GM12878 (cell line): ENCODE measurements at regions of chr5 and their contacts with region 1.

Region 1: DNA sequence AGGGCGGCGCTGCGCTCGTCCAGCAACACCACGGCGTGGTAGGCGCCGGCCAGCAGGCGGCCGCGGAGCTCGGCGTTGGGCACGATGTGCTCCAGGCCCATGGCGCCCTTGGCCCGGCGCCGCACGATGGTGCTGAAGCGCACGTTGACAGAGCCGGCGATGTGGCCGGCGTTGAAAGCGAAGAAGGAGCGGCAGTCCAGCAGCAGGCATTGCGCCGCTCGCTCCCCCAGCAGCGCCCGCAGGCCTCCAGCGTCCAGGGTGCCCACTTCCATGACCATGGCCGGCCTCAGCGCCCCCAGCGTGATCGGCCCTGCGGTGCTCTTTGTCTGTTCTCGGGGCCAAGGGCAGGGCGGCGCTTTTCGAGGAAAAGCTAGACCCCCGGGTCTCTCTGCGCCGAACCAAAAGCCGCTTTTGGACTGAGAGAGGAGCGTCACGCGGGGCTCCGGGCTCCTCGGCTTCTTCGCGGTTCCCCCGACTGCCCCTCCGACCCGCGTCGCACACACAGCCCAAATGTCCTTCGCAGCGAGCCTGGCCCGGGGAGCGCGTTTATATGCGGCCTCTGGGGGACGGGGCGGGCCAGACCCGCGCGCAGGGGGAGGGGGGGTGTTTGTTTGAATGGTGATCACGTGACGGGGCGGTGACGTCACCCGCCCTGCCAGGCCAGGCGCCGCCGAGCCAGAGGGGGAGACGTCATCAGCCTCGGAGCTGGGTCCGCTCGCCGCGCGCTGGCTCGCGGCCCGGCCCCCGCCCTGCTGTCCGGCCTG is at the start of gene DUSP1:
- DNase-seq: no peak
- ATAC-seq: peak; percentile 76
- H3K4me3 ChIP-seq: peak within 1 kb of the TSS; percentile 73
- H3K27ac ChIP-seq: peak within 1 kb of the TSS; percentile 72
- H3K4me1 ChIP-seq: peaks cover 23% of the 10 kb centered on the region
- H3K27me3 ChIP-seq: no peaks in the 10 kb centered on the region
- CTCF ChIP-seq: peak; percentile 57 to 65 (median 59); a peak in 5 of 6 replicates
- EP300 ChIP-seq: 0 out of 4 replicates have a peak, but pooled peaks of 1 of the 2 experiments have one; percentile 32
- POLR2A ChIP-seq: peak; percentile 95
- RAD21 ChIP-seq: peak; percentile 48
- polyA plus RNA-seq, gene DUSP1: 1.4 to 1.9 TPM

Region 2: DNA sequence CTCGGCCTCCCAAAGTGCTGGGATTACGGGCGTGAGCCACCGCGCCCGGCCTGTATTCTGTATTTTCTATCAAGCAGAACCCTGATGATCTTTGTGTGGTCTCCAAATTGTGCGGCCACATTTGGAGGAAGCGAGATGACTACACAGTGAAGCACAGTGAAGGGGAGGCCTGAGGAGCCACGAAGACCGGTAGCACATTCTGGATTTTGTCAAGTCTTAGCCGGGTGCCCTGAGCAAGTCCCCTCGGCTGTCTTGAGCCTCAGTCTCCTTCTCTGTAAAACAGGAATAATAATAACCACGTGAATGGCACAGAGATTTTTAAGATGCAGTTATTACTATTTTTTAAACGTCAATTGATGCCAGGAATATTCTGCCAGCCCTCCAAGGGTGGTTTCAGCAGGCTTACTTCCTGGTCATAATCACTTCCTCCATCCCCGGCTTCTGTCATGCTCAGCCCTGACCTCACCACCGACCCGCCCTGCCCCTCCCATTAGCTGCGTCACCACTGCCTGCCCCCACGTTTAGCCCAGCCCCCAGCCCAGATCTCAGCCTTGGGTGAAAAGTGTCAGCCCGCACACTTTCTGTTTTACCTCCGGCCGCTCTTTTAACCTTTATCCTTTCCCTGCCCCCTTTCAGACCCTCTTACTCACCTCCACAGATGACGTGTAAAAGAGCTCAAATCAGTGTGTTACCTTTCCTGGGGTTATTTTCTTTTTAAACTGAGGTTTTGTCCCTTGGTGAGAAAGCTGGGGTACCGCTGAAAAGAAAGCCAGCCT is 36.2 kb after region 1 on chr5:
- CTCF ChIA-PET with region 1: interaction called, 4 read pairs
- POLR2A ChIA-PET with region 1: interaction called, 6 read pairs
- RAD21 ChIA-PET with region 1: interaction called, 17 read pairs
- SMC1A ChIA-PET with region 1: interaction called, 13 read pairs
- in situ Hi-C with region 1: no loop called
- intact Hi-C with region 1: loop called (anchors 2 kb)
- DNase-seq: peak; percentile 81
- ATAC-seq: peak; percentile 100
- H3K4me3 ChIP-seq: peak overlapping the region; percentile 62
- H3K27ac ChIP-seq: peak overlapping the region; percentile 64
- H3K4me1 ChIP-seq: peaks cover 6% of the 10 kb centered on the region
- H3K27me3 ChIP-seq: no peaks in the 10 kb centered on the region
- CTCF ChIP-seq: no peak
- EP300 ChIP-seq: no peak
- POLR2A ChIP-seq: peak; percentile 54
- RAD21 ChIP-seq: no peak

Region 3: DNA sequence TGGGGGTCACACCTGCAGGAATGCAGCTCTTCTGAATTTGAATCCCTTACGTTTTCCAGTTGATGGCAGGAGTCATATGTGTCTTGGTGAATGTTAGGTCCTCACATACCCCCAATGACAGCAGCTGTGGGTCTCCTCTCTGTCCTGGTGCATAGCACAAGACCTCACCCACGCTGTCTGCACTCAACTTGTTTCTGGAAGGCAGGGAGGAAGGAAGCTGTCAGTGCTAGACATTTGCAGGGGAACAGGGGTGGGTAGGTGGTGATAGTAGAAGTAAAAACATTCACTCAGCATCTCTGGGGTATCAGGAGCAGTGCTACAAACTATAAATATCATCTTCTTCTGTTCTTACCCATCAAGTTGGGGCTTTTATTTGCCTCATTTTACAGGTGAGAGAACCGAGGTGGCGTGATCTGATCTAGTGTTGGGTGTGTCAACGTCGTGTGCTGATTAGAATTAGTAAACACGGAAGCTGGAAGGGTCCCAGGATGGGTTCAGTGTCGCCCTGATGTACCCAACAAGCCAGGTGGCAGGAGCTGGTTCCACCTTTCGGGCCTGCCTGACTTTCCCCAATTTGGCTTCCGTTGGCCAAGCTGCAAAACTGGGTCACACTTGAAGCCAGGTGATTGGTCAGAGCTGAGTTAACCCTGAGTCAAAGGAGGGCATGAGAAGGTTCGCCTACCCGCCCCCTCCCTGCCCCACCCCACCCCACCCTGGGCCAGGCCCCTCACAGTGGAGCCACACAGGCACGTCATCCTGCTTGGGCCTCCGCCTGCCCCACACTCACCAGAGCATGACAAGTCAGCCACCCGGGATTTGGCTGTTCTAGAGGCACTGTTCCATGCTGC is 79.0 kb after region 1 on chr5:
- CTCF ChIA-PET with region 1: interaction called, 20 read pairs
- POLR2A ChIA-PET with region 1: interaction called, 14 read pairs
- RAD21 ChIA-PET with region 1: interaction called, 21 read pairs
- SMC1A ChIA-PET with region 1: interaction called, 3 read pairs
- in situ Hi-C with region 1: no loop called
- intact Hi-C with region 1: no loop called
- DNase-seq: peak; percentile 52
- ATAC-seq: peak; percentile 88
- H3K4me3 ChIP-seq: peak overlapping the region; percentile 21; the same call in 1 of the 2 replicates
- H3K27ac ChIP-seq: peak overlapping the region; percentile 73
- H3K4me1 ChIP-seq: peaks cover 22% of the 10 kb centered on the region
- H3K27me3 ChIP-seq: no peaks in the 10 kb centered on the region
- CTCF ChIP-seq: no peak
- EP300 ChIP-seq: no peak
- POLR2A ChIP-seq: peak; percentile 42; the same call in 1 of the 2 replicates
- RAD21 ChIP-seq: no peak

Region 4: DNA sequence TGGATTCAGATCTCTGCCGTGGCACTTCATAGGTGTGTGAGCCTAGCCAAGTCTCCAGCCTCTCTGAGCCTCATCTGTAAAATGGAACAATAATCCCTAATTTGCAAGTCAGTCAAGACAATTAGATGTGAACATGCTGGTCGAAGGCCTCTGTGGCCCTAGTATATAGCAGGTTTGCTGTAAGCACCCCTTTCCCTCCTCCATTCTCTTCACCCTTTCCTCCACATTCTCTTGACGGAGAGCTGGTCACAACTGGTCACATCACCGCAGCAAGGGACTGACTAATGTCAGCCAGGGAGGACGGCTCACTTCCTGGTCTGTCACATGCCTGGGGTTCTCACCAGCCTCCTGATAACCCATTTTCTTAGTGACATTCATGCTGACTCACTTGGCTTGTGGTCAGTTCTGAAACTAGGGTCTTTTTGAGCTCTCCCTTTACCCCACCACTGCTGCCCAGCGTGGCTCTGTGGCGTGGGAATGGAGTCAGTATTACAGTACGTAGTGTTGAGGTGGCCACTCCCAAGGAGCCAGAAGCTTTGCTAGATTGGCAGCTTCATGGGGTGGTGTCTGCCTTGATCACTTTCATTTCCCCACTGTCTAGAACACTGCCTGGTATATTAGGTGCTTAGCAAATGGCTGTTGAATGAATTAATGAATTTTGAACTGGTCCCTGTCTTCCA is 111.0 kb after region 1 on chr5:
- CTCF ChIA-PET with region 1: interaction called, 9 read pairs
- POLR2A ChIA-PET with region 1: interaction called, 4 read pairs
- RAD21 ChIA-PET with region 1: interaction called, 12 read pairs
- SMC1A ChIA-PET with region 1: interaction called, 6 read pairs
- in situ Hi-C with region 1: no loop called
- intact Hi-C with region 1: no loop called
- DNase-seq: peak; percentile 72
- ATAC-seq: peak; percentile 98
- H3K4me3 ChIP-seq: no peak overlapping the region
- H3K27ac ChIP-seq: peak overlapping the region; percentile 86
- H3K4me1 ChIP-seq: peaks cover 16% of the 10 kb centered on the region
- H3K27me3 ChIP-seq: no peaks in the 10 kb centered on the region
- CTCF ChIP-seq: no peak
- EP300 ChIP-seq: 0 out of 4 replicates have a peak, but pooled peaks of 1 of the 2 experiments have one; percentile 28
- POLR2A ChIP-seq: peak; percentile 75
- RAD21 ChIP-seq: no peak

Region 5: GRCh38 chr5:172904643-172905347 is 133.9 kb after region 1 on chr5:
- CTCF ChIA-PET with region 1: interaction called, 24 read pairs
- POLR2A ChIA-PET with region 1: interaction called, 4 read pairs
- RAD21 ChIA-PET with region 1: interaction called, 17 read pairs
- SMC1A ChIA-PET with region 1: interaction called, 10 read pairs
- in situ Hi-C with region 1: no loop called
- intact Hi-C with region 1: loop called (anchors 5 kb)
- DNase-seq: no peak
- ATAC-seq: no peak
- H3K4me3 ChIP-seq: no peak overlapping the region
- H3K27ac ChIP-seq: no peak overlapping the region
- H3K4me1 ChIP-seq: peaks cover 18% of the 10 kb centered on the region
- H3K27me3 ChIP-seq: no peaks in the 10 kb centered on the region
- CTCF ChIP-seq: no peak
- EP300 ChIP-seq: no peak
- POLR2A ChIP-seq: no peak
- RAD21 ChIP-seq: no peak

Region 6: GRCh38 chr5:172932313-172933017 is 161.6 kb after region 1 on chr5:
- CTCF ChIA-PET with region 1: interaction called, 44 read pairs
- POLR2A ChIA-PET with region 1: no interaction called
- RAD21 ChIA-PET with region 1: interaction called, 9 read pairs
- SMC1A ChIA-PET with region 1: interaction called, 6 read pairs
- in situ Hi-C with region 1: no loop called
- intact Hi-C with region 1: loop called (anchors 2 kb)
- DNase-seq: no peak
- ATAC-seq: peak; percentile 97
- H3K4me3 ChIP-seq: no peak overlapping the region
- H3K27ac ChIP-seq: no peak overlapping the region
- H3K4me1 ChIP-seq: peaks cover 5% of the 10 kb centered on the region; the same call in 1 of the 2 replicates
- H3K27me3 ChIP-seq: no peaks in the 10 kb centered on the region
- CTCF ChIP-seq: peak; percentile 94 to 96 (median 96)
- EP300 ChIP-seq: no peak
- POLR2A ChIP-seq: no peak
- RAD21 ChIP-seq: peak; percentile 95

Region 7: DNA sequence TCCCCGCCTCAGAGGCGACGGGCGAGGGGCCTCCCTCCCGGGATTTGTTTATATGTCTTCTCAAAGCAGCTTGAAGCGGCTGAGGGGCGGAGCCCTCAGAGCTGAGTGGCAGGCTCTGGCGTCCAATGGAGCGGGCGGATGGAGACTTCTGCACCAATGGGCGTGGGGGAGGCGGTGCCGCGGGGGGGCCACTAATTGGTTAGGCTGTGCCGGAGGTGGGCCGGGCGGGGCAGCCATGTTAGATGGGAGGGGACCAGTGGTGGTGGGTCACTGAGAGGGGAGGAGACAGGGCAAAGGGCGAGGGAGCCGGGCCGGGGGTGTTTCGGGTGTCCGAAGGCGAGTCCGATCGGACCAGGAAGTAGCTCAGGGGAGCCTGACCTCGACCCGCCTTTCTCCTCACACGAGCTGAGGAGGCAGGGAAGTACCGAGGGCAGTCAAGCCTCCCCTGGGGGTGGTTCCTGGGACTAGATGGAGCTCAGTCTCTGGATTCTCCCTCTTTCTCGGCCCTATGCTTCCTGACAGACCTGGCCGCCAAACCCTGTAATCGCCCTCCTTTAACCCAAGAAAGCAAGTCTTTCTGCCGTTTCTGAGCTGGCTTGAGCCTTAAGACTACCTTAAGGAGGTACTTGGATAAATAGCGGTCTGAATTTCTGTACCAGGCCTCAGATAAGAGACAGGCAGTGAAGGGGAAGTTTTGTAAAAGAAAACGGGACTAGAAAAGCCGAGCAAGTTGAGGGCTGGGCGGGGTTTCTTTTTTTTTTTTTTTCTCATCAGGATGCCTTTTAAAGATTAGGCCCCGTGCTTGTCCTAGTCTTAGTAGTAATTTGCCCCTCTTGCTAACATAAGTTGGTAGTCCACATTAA is 286.4 kb after region 1 on chr5:
- CTCF ChIA-PET with region 1: no interaction called
- POLR2A ChIA-PET with region 1: interaction called, 3 read pairs
- RAD21 ChIA-PET with region 1: interaction called, 4 read pairs
- SMC1A ChIA-PET with region 1: no interaction called
- in situ Hi-C with region 1: no loop called
- intact Hi-C with region 1: loop called (anchors 10 kb)
- DNase-seq: peak; percentile 85
- ATAC-seq: peak; percentile 92
- H3K4me3 ChIP-seq: peak overlapping the region; percentile 93
- H3K27ac ChIP-seq: peak overlapping the region; percentile 97
- H3K4me1 ChIP-seq: peaks cover 18% of the 10 kb centered on the region
- H3K27me3 ChIP-seq: no peaks in the 10 kb centered on the region
- CTCF ChIP-seq: peak in 1 of 3 experiments; percentile 0; a peak in 1 of 6 replicates
- EP300 ChIP-seq: no peak
- POLR2A ChIP-seq: peak; percentile 72
- RAD21 ChIP-seq: no peak